Endothelial cell of umbilical vein (primary cell): ENCODE measurements at regions of chr2 and their contacts with region 1.

Region 1: GRCh38 chr2:218568190-218569037 is at the starts of genes CNOT9 and USP37:
- DNase-seq: peak; percentile 99
- H3K4me3 ChIP-seq: peak within 1 kb of the TSS; percentile 58 to 81 (median 71)
- H3K27ac ChIP-seq: peak within 1 kb of the TSS; percentile 94
- H3K4me1 ChIP-seq: peaks cover 17% of the 10 kb centered on the region
- H3K27me3 ChIP-seq: no peaks in the 10 kb centered on the region
- CTCF ChIP-seq: no peak
- POLR2A ChIP-seq: peak; percentile 81
- total RNA-seq, gene CNOT9: 63.2 and 68.9 TPM in 2 replicates
- total RNA-seq, gene USP37: 13.1 and 14.4 TPM in 2 replicates

Region 2: GRCh38 chr2:218286570-218287459 is 281.6 kb before region 1 on chr2:
- CTCF ChIA-PET with region 1: no interaction called
- POLR2A ChIA-PET with region 1: no interaction called
- dilution Hi-C with region 1: no loop called
- intact Hi-C with region 1: loop called (anchors 2 kb)
- DNase-seq: peak; percentile 93
- H3K4me3 ChIP-seq: no peak overlapping the region
- H3K27ac ChIP-seq: peak overlapping the region; percentile 88
- H3K4me1 ChIP-seq: peaks cover 77% of the 10 kb centered on the region
- H3K27me3 ChIP-seq: no peaks in the 10 kb centered on the region
- CTCF ChIP-seq: no peak
- POLR2A ChIP-seq: peak; percentile 16

Region 3: DNA sequence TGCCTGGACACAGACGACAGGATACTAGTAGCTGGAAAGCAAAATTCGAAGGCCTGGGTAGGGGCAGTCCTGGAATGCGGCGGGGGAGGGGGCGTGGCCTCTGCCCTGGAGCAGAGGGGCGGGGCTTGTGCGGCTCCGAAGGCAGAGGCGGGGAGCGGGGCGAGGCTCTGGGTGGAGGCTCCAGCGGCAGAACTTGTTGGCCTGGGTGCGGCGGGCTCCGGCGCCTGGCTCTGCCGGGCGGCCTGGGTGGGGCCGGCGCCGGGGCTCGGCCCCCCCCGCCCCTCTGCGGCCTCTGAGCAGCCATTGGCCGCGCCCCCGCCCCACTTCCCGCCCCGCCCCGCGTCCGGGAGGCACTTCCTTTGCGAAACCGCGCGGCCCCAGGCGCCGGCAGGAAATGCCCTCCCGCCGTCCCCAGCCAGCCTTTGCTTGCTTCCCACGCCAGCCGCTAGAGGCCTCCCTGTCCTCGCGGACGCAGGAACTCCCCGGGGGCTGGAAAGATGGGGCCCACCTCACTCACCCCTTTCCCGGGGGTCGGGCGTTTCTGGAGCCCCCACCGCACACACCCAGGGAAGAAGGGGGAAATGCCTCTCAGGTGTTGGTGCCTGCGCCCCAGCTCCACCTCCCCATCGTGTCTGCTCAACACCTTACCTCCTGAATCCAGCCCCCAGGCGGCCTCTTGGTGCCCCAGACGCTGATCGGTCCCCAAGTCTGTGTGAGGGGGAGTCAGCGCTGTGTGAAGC is 162.0 kb before region 1 on chr2:
- CTCF ChIA-PET with region 1: no interaction called
- POLR2A ChIA-PET with region 1: interaction called, 4 read pairs
- dilution Hi-C with region 1: no loop called
- intact Hi-C with region 1: loop called (anchors 1 kb)
- DNase-seq: peak; percentile 94
- H3K4me3 ChIP-seq: peak overlapping the region; percentile 16 to 25 (median 18)
- H3K27ac ChIP-seq: peak overlapping the region; percentile 81
- H3K4me1 ChIP-seq: peaks cover 22% of the 10 kb centered on the region
- H3K27me3 ChIP-seq: no peaks in the 10 kb centered on the region
- CTCF ChIP-seq: peak; percentile 66 to 91
- POLR2A ChIP-seq: peak; percentile 80

Region 4: DNA sequence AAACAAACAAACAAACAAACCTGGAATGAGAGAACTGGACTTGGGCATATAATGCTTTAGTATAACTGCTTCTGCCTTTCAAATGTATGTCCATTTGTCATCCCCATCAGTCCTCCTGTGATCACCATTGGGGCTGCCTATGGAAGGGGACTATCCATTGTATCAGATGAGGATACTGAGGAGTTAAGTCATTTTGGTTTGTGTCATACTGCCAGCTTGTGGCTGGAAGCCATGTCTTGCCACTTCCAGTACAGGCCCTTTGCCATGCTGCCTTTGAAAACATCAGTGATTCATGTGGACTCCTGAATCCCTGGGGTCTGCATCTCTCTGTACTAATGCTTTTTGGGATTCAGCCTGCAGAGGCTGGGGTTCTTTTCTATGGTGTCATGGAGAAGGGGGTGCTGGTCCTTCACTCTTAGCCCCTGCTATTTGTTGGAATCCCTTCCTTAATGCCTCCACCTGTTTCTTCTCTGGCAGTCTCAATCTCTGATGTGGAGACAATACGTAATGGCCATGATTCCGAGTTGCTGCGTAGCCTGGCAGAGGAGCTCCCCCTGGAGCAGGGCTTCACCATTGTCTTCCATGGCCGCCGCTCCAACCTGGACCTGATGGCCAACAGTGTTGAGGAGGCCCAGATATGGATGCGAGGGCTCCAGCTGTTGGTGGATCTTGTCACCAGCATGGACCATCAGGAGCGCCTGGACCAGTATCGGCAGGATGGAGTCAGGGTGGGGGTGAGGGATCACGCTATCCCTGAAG is 49.9 kb after region 1 on chr2:
- CTCF ChIA-PET with region 1: no interaction called
- POLR2A ChIA-PET with region 1: no interaction called
- dilution Hi-C with region 1: no loop called
- intact Hi-C with region 1: no loop called
- DNase-seq: no peak
- H3K4me3 ChIP-seq: no peak overlapping the region
- H3K27ac ChIP-seq: no peak overlapping the region
- H3K4me1 ChIP-seq: peaks cover 9% of the 10 kb centered on the region
- H3K27me3 ChIP-seq: no peaks in the 10 kb centered on the region
- CTCF ChIP-seq: no peak
- POLR2A ChIP-seq: no peak

Region 5: DNA sequence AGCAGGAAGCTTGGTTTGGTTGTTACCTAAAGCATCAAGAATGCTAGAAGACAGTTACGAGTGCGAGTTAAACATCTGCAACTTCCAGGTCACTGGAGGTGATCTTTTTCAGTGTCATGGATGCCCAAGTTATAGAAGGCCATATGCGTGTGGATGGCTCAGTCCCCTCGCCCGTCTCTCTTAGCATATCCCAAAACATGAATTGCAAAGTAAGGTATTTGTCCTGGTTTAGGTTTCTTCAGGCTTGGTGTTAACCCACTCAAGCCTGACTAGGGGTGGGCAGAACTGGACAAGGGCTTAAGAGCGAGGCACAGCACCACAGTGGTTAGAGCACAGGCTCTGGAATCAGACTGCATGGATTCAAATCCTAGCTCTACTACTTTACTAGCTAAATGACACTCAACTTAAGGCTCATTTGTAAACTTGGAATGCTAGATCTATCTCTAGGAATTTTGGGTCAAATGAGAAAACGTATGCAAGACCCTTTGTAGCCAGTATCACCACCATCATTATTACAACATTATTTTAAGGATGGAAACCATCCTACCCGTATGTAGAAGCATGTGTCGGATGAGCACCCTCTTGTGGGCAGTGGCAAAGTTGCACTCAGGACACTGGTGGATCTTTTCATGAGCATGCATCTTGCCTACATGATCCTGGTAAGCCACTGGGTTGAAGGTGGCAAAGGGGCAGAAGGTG is 79.8 kb after region 1 on chr2:
- CTCF ChIA-PET with region 1: interaction called, 3 read pairs
- POLR2A ChIA-PET with region 1: no interaction called
- dilution Hi-C with region 1: loop called (anchors 5 kb)
- intact Hi-C with region 1: loop called (anchors 1 kb)
- DNase-seq: peak; percentile 75
- H3K4me3 ChIP-seq: no peak overlapping the region
- H3K27ac ChIP-seq: no peak overlapping the region
- H3K4me1 ChIP-seq: peaks cover 6% of the 10 kb centered on the region
- H3K27me3 ChIP-seq: no peaks in the 10 kb centered on the region
- CTCF ChIP-seq: peak; percentile 81 to 91
- POLR2A ChIP-seq: no peak

Region 6: DNA sequence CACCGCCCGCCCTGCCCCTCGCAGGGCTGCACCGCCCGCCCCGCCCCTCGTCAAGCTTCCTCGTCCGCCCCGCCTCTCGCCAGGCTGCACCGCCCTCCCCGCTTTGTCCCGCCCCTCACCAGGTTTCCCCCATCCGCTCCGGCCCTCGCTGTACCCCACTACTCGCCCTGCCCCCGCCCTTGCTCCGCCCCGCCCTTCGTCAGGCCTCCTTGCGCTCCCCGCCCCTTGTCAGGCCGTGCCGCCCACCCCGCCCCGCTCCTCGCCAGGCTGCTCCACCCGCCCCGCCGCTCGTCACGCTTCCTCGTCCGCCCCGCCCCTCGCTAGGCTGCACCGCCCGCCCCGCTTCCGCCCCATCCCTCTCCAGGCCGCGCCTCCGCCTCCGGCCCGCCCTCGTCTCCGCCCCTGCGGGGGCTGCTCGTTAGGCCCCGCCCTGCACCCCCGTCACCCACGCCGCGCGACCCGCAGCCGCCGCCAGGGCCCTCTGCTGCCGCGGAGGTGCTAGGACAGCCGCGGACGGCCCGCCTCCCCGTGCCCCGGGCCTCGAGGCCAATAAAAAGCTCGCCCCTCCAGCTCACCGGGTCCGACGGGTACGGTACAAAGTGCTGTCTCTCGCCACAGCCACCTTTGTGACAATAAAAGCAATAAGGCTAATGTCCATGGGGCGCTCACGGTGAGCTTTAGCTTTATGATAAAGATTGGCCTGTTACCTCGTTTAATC is 819.9 kb after region 1 on chr2:
- CTCF ChIA-PET with region 1: no interaction called
- POLR2A ChIA-PET with region 1: no interaction called
- dilution Hi-C with region 1: no loop called
- intact Hi-C with region 1: loop called (anchors 10 kb)
- DNase-seq: peak; percentile 96
- H3K4me3 ChIP-seq: peak overlapping the region in 2 of 3 experiments; percentile 46 to 55
- H3K27ac ChIP-seq: no peak overlapping the region
- H3K4me1 ChIP-seq: peaks cover 9% of the 10 kb centered on the region
- H3K27me3 ChIP-seq: peaks cover 2% of the 10 kb centered on the region in 2 experiments
- CTCF ChIP-seq: peak; percentile 47 to 56
- POLR2A ChIP-seq: no peak